Posterior vena cava (tissue), 2 donors: ENCODE measurements at regions of chr9 and their contacts with region 1.

Region 1: DNA sequence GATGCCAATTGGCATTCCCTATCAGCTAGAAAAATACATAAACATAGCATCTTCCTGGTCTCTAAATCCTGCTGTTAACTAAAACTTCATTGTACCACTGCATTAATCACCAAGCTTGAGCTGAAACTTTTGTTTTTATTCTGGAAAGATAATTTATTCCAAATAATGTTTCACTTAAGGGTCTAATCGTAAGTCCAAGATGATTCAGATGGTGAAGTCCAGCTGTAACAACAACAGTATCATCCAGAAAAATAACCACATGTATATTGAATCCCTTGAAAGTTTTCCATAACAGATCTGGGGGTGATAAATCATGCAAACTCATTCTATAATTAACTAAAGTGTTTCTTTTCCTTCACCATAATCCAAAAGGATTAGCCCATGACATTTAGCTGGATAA is 23.9 kb downstream of the RORB start:
- DNase-seq: no peak

Region 2: GRCh38 chr9:74503666-74504065 is 17.3 kb before region 1 on chr9:
- intact Hi-C with region 1: loop called in 1 of 2 experiments (anchors 1 kb)
- DNase-seq: no peak

Region 3: GRCh38 chr9:74573792-74574191 is 52.8 kb after region 1 on chr9:
- intact Hi-C with region 1: loop called in 1 of 2 experiments (anchors 2 kb)
- DNase-seq: no peak

Region 4: DNA sequence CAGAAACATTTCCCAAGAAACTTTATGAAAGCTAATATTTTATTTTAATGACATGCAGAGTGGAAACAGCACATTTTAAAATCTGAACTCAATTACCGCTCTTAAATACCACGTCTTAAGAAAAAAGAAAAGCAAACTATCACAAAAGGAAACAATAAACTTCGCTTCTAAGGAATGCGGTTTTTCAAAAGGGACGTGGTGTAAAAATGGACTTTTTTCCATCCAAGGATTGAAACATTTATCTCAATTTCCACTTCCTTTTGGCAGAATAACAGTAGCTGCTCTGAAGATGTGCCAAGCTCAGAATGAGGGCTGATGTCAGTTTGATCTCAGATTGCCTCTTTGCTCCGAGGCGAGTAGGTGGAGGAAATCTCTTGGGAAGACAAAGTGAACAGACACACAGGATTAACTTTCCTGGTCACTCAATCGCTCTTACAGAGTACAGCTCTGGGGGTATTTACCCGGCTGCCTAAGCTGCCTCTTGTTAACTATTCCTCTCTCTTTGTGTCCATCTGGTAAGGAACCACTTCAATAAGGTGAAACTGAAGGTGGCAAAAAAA is 208.2 kb after region 1 on chr9:
- intact Hi-C with region 1: no loop called
- DNase-seq: no peak